ENCODE measurements at regions of chr16 and their contacts with region 1.

Region 1: DNA sequence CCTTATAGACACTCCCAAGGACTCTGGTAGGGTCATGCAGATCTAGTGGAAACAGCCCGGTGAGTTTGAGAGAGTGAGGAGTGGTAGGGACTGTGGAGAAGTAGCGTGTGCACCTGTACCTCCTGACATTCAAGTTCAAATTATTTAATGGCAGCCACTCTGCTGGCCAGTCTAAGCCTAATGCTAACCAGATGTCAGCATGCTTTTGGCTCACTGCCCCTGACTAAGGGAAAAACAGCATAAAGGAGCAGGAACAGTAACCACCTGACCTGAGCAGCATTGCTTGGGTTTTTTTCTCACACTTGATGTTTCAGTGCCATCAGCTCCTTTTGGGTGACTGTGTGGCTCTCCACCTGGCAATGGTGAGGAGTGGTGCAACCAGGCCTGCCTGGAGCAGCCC is 23.8 kb upstream of the SLC12A3 start:
- DNase-seq: no peak
- H3K4me3 Mint-ChIP-seq: no peak overlapping the region
- H3K27ac Mint-ChIP-seq: no peak overlapping the region
- H3K4me1 Mint-ChIP-seq: peaks cover 9% of the 10 kb centered on the region
- H3K27me3 Mint-ChIP-seq: no peaks in the 10 kb centered on the region

Region 2: DNA sequence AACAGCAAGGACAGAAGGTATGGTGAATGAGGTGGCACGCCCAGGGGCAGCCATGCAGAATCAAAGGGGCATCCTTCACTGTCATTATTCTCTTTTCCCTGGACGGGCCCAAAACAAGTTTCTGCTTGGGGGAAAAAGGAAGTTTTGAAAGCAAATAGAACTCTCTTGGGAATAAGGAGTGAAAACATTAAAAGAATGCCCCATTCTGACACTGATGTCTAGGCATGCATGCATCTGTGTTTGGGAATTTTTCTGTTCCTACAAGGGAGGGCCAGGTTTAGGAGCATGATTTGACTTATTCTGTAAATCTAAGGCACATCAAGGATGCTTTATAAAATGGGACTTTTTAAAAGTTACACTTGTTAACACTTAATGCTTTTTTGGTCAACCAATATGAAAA is 10.6 kb before region 1 on chr16:
- CTCF ChIA-PET with region 1: interaction called, 10 read pairs
- POLR2A ChIA-PET with region 1: interaction called, 4 read pairs
- DNase-seq: no peak
- H3K4me3 Mint-ChIP-seq: no peak overlapping the region
- H3K27ac Mint-ChIP-seq: no peak overlapping the region
- H3K4me1 Mint-ChIP-seq: peaks cover 2% of the 10 kb centered on the region
- H3K27me3 Mint-ChIP-seq: no peaks in the 10 kb centered on the region

Region 3: DNA sequence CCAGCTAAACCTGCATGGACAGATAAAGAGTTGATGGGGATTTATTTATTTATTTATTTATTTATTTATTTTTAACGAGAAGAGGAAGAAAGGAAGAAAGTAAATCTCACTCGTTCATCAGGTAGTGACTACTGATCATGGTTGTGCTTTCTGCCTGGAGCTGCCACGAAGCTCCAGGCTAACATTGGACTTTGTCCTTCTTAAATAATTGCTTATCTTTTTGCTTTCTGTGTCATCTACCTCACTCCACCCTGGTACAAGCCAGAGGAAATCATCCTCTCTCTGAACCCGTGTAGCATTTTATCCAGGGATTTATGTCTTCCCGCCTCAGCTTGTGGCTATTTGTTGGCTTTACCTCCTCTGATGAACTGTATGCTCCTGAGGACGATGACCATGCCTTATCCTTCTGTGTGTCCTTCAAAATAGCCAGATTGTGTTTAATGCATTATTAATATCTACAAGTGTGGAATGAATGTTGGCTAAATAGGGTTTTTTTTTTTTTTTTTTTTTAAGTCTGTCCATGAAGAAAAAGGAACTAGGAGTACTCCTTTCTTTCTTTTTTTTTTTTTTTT is 15.7 kb after region 1 on chr16:
- CTCF ChIA-PET with region 1: interaction called, 15 read pairs
- POLR2A ChIA-PET with region 1: no interaction called
- DNase-seq: no peak
- H3K4me3 Mint-ChIP-seq: no peak overlapping the region
- H3K27ac Mint-ChIP-seq: no peak overlapping the region
- H3K4me1 Mint-ChIP-seq: peaks cover 30% of the 10 kb centered on the region
- H3K27me3 Mint-ChIP-seq: no peaks in the 10 kb centered on the region

Region 4: GRCh38 chr16:56916571-56917403 is 75.6 kb after region 1 on chr16:
- CTCF ChIA-PET with region 1: no interaction called
- POLR2A ChIA-PET with region 1: no interaction called
- DNase-seq: peak; percentile 54
- H3K4me3 Mint-ChIP-seq: peak overlapping the region; percentile 51
- H3K27ac Mint-ChIP-seq: peak overlapping the region; percentile 92
- H3K4me1 Mint-ChIP-seq: peaks cover 36% of the 10 kb centered on the region
- H3K27me3 Mint-ChIP-seq: peaks cover 17% of the 10 kb centered on the region